Activated CD4-positive, alpha-beta memory T cell treated with anti-CD3 and anti-CD28 coated beads, Interleukin-2, amount 10 ng/mL, durations not matched to agents 7 days and 5 days (primary cell): ENCODE measurements at regions of chr1 and their contacts with region 1.

Region 1: DNA sequence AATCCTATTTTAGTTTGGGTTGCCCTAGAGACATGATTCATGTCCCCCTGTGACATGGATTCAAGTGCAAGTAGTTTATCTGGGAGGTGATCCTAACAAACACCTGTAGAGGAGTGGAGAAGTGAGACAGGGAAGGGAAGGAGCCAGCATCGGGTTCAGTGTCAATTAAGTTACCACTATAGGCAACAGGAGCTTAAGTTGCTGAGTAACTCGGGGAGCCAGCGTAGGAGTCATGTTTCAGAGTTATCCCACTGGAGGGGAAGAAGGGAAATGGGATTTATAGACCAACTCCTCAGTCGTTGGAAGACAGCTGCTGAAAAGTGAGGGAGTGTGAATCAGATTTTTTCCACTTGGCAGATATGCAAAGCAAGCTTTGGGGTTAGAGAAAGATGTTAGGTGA is 54.9 kb downstream of the SLC30A7 start:
- DNase-seq: no peak
- H3K4me3 Mint-ChIP-seq: no peak overlapping the region
- H3K27ac Mint-ChIP-seq: no peak overlapping the region
- H3K4me1 Mint-ChIP-seq: peaks cover 69% of the 10 kb centered on the region
- H3K27me3 Mint-ChIP-seq: no peaks in the 10 kb centered on the region

Region 2: DNA sequence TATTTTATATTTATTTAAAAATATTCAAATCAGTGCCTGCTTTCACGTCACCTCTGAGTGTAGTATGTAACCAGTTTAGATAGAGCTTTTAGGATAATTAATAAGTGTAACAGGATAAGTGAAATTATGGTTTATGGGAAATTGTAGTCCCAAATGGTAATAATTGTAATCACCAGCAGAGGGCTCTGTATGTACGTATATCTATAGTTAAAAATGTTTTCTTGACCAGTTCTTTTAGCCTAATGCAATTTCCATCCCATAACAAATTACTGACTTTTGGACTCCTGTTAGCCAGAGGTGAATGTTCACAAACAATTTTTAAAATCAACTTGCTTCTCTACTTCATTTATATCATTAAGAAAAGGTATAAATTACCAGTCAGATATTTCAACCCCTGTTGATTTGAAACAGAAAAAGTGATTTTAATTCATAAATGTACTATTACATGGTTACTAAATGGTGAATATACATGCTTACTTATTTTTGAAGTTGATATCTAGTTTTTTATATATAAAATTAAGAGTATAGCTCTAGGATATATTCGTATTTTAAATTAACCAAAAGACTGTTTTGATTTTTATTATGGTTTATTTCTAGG is 29.6 kb before region 1 on chr1:
- CTCF ChIA-PET with region 1: interaction called, 5 read pairs
- POLR2A ChIA-PET with region 1: interaction called, 10 read pairs
- DNase-seq: no peak
- H3K4me3 Mint-ChIP-seq: no peak overlapping the region
- H3K27ac Mint-ChIP-seq: no peak overlapping the region
- H3K4me1 Mint-ChIP-seq: peaks cover 32% of the 10 kb centered on the region
- H3K27me3 Mint-ChIP-seq: no peaks in the 10 kb centered on the region

Region 3: DNA sequence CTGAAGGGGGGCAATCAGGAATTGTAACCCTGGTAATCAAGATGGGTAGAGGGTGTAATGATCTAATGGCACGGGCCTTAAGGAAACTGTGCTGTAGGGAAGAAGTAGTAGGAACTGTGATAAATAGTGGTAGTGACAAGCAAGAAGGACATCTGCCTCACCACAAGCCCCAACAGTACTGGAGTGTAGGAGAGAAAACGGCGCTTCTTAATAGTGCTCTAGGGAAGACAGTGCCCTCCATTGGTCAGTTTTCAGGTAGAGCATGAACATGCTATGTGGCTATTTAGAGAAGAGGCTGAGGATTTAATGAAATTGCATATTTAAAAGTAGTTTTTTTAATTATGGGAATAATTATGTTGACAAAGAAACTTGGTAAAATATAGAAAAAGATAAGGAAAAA is 22.7 kb before region 1 on chr1:
- CTCF ChIA-PET with region 1: interaction called, 14 read pairs
- POLR2A ChIA-PET with region 1: interaction called, 10 read pairs
- DNase-seq: no peak
- H3K4me3 Mint-ChIP-seq: no peak overlapping the region
- H3K27ac Mint-ChIP-seq: no peak overlapping the region
- H3K4me1 Mint-ChIP-seq: peaks cover 54% of the 10 kb centered on the region
- H3K27me3 Mint-ChIP-seq: no peaks in the 10 kb centered on the region